MCF 10A (cell line): ENCODE measurements at regions of chr11 and their contacts with region 1.

Region 1: GRCh38 chr11:56841210-56841810 is 92.8 kb upstream of the OR9G4 start:
- DNase-seq: peak; percentile 78
- H3K4me3 Mint-ChIP-seq: no peak overlapping the region
- H3K27ac Mint-ChIP-seq: no peak overlapping the region
- H3K4me1 Mint-ChIP-seq: peaks cover 21% of the 10 kb centered on the region
- H3K27me3 Mint-ChIP-seq: no peaks in the 10 kb centered on the region
- CTCF ChIP-seq: peak; percentile 79

Region 2: DNA sequence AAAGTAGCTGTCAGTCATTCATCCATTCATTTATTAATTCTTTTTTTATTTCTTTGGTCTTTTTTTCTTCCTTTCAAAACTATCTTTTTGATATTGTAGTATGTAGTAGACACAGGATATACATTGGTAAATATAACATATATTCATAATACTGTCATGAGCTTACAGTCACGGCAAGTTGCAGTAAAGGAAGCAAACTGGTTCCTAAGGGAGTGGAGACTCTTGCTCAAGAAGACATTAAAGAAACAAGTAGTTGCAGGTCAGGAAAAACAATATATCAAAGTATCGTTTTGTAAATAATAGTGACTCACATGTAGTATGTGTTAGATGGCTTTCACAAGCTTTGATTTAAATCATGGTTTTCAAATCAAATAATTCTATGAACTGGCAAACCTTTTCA is 170.3 kb before region 1 on chr11:
- CTCF ChIA-PET with region 1: no interaction called
- POLR2A ChIA-PET with region 1: no interaction called
- intact Hi-C with region 1: no loop called
- DNase-seq: no peak
- H3K4me3 Mint-ChIP-seq: no peak overlapping the region
- H3K27ac Mint-ChIP-seq: no peak overlapping the region
- H3K4me1 Mint-ChIP-seq: no peaks in the 10 kb centered on the region
- H3K27me3 Mint-ChIP-seq: peaks cover 21% of the 10 kb centered on the region
- CTCF ChIP-seq: no peak

Region 3: GRCh38 chr11:56910785-56911184 is 69.5 kb after region 1 on chr11:
- CTCF ChIA-PET with region 1: interaction called, 18 read pairs
- POLR2A ChIA-PET with region 1: interaction called, 6 read pairs
- intact Hi-C with region 1: no loop called
- DNase-seq: peak; percentile 43
- H3K4me3 Mint-ChIP-seq: no peak overlapping the region
- H3K27ac Mint-ChIP-seq: peak overlapping the region; percentile 42
- H3K4me1 Mint-ChIP-seq: peaks cover 20% of the 10 kb centered on the region
- H3K27me3 Mint-ChIP-seq: no peaks in the 10 kb centered on the region
- CTCF ChIP-seq: no peak

Region 4: GRCh38 chr11:57085611-57086010 is 244.3 kb after region 1 on chr11:
- CTCF ChIA-PET with region 1: interaction called, 3 read pairs
- POLR2A ChIA-PET with region 1: no interaction called
- intact Hi-C with region 1: loop called (anchors 2 kb)
- DNase-seq: no peak
- H3K4me3 Mint-ChIP-seq: no peak overlapping the region
- H3K27ac Mint-ChIP-seq: no peak overlapping the region
- H3K4me1 Mint-ChIP-seq: no peaks in the 10 kb centered on the region
- H3K27me3 Mint-ChIP-seq: no peaks in the 10 kb centered on the region
- CTCF ChIP-seq: no peak

Region 5: DNA sequence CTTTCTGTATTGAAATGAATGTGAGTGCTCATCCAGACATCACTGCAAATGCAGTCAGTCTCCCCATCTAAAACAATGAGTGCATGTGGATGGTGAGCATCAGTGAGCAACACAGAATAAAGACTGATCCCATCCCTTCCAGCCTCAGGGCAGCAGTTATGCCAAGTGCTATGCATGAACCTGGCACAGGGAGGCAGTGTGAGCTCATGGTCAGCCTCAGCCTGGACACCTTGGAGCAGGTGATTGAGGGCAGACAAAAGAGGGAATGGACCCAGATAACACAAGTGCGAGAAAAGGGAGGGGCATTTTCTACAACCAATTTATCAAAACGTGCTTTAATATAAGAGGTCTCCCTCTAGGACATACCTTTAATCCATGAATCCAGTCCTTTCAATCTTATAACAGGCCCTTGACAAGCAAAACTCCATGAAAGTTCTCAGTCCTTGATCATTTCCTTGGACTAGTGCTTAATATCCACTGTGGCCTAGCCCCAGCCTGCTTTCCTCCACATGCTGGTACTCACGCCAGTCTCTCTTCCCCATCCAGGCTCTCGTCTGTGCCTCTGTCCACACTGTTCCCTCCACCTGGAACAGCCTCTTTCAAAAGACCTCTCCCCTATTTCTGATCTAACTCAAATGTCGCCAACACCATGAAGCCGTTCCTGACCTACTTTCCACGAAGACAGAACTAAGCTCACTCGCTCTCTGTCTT is 289.9 kb after region 1 on chr11:
- CTCF ChIA-PET with region 1: interaction called, 32 read pairs
- POLR2A ChIA-PET with region 1: no interaction called
- intact Hi-C with region 1: loop called (anchors 1 kb)
- DNase-seq: peak; percentile 57
- H3K4me3 Mint-ChIP-seq: no peak overlapping the region
- H3K27ac Mint-ChIP-seq: no peak overlapping the region
- H3K4me1 Mint-ChIP-seq: peaks cover 11% of the 10 kb centered on the region
- H3K27me3 Mint-ChIP-seq: no peaks in the 10 kb centered on the region
- CTCF ChIP-seq: peak; percentile 58

Region 6: DNA sequence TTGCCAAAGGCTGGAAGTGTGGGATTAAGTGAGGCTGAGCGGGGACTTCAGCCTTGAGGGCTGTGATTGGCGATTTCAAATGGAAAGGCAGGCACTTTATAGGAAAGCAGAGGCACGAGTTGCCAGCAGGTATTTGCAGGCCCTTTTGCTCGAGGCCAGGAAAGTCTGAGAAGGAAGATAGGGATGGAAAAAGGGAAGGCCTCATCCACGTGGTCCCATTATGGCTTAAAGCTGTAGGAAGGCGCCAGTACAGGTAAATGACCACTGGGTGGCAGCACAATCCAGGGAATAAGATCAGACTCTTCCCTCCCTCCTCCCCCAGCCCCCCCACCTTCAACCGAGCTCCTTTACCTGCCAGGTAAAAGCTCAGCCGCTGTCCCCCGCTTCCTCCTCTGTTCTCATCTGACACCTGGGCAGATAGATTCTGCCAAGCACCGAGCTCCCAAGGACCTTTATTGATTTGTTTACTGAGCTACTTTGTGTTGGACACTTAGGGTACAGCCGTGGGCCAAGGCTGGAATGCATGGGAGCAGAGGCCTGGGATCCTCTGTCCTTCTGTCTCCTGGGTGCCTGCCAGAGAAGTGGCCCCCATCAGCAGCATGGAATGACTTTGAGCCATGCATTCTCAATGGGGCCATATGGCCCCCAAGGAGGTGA is 504.4 kb after region 1 on chr11:
- CTCF ChIA-PET with region 1: interaction called, 3 read pairs
- POLR2A ChIA-PET with region 1: no interaction called
- intact Hi-C with region 1: loop called (anchors 5 kb)
- DNase-seq: peak; percentile 85
- H3K4me3 Mint-ChIP-seq: no peak overlapping the region
- H3K27ac Mint-ChIP-seq: no peak overlapping the region
- H3K4me1 Mint-ChIP-seq: no peaks in the 10 kb centered on the region
- H3K27me3 Mint-ChIP-seq: no peaks in the 10 kb centered on the region
- CTCF ChIP-seq: peak; percentile 90